CD4-positive, alpha-beta memory T cell (primary cell): ENCODE measurements at regions of chr17 and their contacts with region 1.

Region 1: GRCh38 chr17:44006598-44007345 is 2.4 kb downstream of the NAGS start:
- DNase-seq: peak; percentile 88 to 98 (median 90)
- H3K4me3 ChIP-seq: peak overlapping the region; percentile 78 to 87
- H3K4me3 Mint-ChIP-seq: peak overlapping the region; percentile 82 to 92 (median 90)
- H3K27ac ChIP-seq: peak overlapping the region; percentile 41
- H3K27ac Mint-ChIP-seq: peak overlapping the region; percentile 75 to 92 (median 88)
- H3K4me1 ChIP-seq: peaks cover 39% of the 10 kb centered on the region
- H3K4me1 Mint-ChIP-seq: peaks cover 8 to 34% (median 22%) of the 10 kb centered on the region in 4 donors
- H3K27me3 ChIP-seq: no peaks in the 10 kb centered on the region
- H3K27me3 Mint-ChIP-seq: peaks cover 0 to 1% of the 10 kb centered on the region in 2 donors

Region 2: GRCh38 chr17:43673516-43674323 is 333.1 kb before region 1 on chr17:
- CTCF ChIA-PET with region 1: no interaction called
- POLR2A ChIA-PET with region 1: no interaction called
- intact Hi-C with region 1: no loop called
- DNase-seq: peak; percentile 57 to 67 (median 62)
- H3K4me3 ChIP-seq: no peak overlapping the region
- H3K4me3 Mint-ChIP-seq: no peak overlapping the region
- H3K27ac ChIP-seq: no peak overlapping the region
- H3K27ac Mint-ChIP-seq: peak overlapping the region in 3 of 7 donors; percentile 6 to 68 (median 67)
- H3K4me1 ChIP-seq: peaks cover 13% of the 10 kb centered on the region
- H3K4me1 Mint-ChIP-seq: peaks cover 4 to 19% (median 12%) of the 10 kb centered on the region in 4 donors
- H3K27me3 ChIP-seq: no peaks in the 10 kb centered on the region
- H3K27me3 Mint-ChIP-seq: peaks cover 0 to 4% of the 10 kb centered on the region in 2 donors

Region 3: DNA sequence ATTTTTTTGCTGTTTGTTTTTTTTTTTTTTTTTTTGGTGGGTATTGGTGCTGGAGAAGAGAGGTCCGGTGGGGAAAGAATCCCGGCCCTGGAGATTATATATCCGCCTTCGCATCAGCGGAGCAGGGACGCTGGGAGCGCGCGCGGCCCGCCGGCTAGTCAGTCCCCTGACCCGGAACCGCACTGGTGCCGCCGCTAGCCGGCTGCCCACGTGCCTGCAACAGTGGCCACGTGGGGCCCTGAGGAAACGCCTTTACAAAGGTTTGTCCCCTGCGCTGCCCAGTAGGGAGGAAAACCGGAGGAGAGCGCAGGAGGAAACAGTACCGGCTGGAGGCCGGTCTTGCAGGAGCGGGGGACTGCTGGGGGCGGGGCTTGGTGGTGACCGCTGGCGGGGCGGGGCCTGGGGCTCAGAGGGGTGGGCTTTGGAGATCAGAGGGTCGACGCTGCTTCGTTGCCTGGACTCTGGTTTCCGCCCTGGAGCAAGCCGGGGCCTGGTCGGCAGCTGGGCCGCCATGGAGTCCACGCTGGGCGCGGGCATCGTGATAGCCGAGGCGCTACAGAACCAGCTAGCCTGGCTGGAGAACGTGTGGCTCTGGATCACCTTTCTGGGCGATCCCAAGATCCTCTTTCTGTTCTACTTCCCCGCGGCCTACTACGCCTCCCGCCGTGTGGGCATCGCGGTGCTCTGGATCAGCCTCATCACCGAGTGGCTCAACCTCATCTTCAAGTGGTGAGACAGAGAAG is 63.9 kb after region 1 on chr17 and contains the start of gene G6PC3:
- CTCF ChIA-PET with region 1: interaction called, 3 read pairs
- POLR2A ChIA-PET with region 1: interaction called, 3 read pairs
- intact Hi-C with region 1: loop called (anchors 1 kb)
- DNase-seq: peak; percentile 56 to 76 (median 64)
- H3K4me3 ChIP-seq: peak within 1 kb of the TSS; percentile 69 to 79
- H3K4me3 Mint-ChIP-seq: peak within 1 kb of the TSS; percentile 90 to 97 (median 94)
- H3K27ac ChIP-seq: peak within 1 kb of the TSS; percentile 78
- H3K27ac Mint-ChIP-seq: peak within 1 kb of the TSS; percentile 83 to 98 (median 96)
- H3K4me1 ChIP-seq: peaks cover 33% of the 10 kb centered on the region
- H3K4me1 Mint-ChIP-seq: peaks cover 22 to 50% (median 34%) of the 10 kb centered on the region in 4 donors
- H3K27me3 ChIP-seq: no peaks in the 10 kb centered on the region
- H3K27me3 Mint-ChIP-seq: no peaks in the 10 kb centered on the region
- total RNA-seq, gene G6PC3: 10.6 to 11.8 TPM